H1 (cell line): ENCODE measurements at regions of chr15 and their contacts with region 1.

Region 1: DNA sequence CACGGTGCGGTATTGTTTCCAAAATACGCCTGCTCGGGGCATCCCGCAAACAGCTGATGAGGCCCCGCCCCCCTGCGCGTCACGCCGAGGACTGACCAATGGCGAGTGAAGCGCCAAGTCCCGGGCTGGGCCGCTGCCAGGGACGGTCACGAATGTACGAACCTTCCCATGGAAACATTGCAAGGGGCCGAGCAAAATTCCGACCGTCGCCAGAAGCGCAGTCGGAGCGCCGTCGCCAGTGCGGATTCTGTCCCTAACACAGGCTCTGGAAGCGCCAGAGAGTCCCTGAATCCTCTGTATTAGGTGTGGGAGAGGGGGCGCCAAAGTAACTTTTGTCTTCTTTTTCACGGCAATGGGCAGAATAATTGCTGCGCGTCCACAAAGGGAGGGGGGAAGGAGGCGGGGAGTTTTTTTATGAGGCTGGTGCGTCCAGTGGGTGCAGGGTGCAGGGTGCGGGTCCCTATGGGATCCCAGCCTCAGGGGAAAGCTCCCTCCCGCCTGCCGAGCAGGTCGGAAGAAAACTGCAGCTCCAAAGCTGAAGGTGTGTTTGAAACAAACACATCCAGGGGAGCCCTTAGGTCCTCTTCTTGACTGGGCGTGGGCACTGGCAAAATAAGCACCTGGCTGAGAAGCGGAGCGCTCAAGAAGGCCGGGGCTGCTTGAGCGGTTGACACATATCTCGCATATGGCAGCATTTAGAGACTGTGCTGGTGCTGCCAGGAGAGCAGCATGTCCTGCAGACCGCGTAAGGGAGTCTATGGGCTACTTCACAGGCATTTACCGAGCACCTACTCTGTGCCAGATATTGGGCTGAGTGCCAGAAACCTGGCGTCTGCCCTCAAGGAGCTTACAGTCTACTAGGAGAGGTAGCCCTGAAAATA is at the start of gene BMF:
- DNase-seq: peak; percentile 98 to 100
- H3K4me3 ChIP-seq: peak within 1 kb of the TSS; percentile 71 to 92 (median 90)
- H3K27ac ChIP-seq: peak within 1 kb of the TSS; percentile 29; the same call in 1 of the 2 replicates
- H3K4me1 ChIP-seq: peaks cover 26 to 50% (median 37%) of the 10 kb centered on the region in 4 experiments
- H3K27me3 ChIP-seq: no peaks in the 10 kb centered on the region
- CTCF ChIP-seq: peak; percentile 10 to 45 (median 43); a peak in 3 of 4 replicates
- EP300 ChIP-seq: no peak
- POLR2A ChIP-seq: no peak
- RAD21 ChIP-seq: peak; percentile 24 to 48
- total RNA-seq, gene BMF: 24.2 and 30.9 TPM in 2 replicates

Region 2: DNA sequence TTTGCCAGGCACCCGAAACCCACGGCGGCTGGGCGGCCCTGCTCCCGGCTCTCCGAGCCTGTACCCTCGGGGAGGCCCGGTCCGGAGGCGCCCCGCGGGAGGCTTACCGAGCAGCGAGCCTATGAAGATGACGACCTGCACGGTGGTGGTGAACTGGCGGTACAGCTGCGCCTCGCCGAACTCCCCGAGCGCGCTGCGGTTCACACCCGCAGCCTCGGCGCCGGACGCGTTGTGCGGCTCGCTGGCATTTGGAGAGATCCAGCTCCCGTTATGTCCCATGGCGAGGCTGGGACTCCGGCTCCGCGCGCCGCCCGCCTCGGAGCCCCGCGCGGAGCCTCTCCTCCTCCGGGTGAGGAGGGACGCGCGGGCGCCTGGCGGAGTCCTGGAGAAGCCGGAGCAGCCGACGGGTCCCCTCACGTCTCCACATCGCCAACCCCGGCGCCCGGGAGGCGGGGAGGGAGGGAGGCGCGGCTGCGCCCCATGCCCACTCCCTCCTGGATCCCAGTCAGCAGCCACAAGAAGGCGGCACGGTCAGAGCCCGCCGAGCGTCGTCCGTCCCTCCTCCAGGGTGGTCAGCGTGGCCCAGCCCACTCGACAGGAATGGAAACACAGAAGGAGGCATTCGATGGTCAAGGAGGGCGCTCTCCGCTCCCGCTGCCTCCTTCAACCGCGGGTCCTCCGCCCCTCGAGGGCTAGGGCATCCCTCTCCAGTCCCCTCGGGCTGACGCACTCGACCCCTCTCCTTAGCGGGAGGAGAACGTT is 189.2 kb before region 1 on chr15 and contains the start of gene GPR176:
- CTCF ChIA-PET with region 1: no interaction called
- POLR2A ChIA-PET with region 1: no interaction called
- DNase-seq: peak in 1 of 2 experiments; percentile 75
- H3K4me3 ChIP-seq: peak within 1 kb of the TSS; percentile 91 to 95 (median 94)
- H3K27ac ChIP-seq: peak within 1 kb of the TSS; percentile 69
- H3K4me1 ChIP-seq: peaks cover 5 to 9% (median 7%) of the 10 kb centered on the region in 4 experiments; a peak in 6 of 7 replicates
- H3K27me3 ChIP-seq: no peaks in the 10 kb centered on the region
- CTCF ChIP-seq: no peak; a peak in 1 of 4 replicates
- EP300 ChIP-seq: no peak
- POLR2A ChIP-seq: peak in 1 of 2 experiments; percentile 67; a peak in 2 of 3 replicates
- RAD21 ChIP-seq: no peak
- total RNA-seq, gene GPR176: 190 and 198 TPM in 2 replicates

Region 3: GRCh38 chr15:40038638-40039543 is 70.2 kb before region 1 on chr15 and contains the start of gene SRP14:
- CTCF ChIA-PET with region 1: interaction called, 406 read pairs
- POLR2A ChIA-PET with region 1: interaction called, 11 read pairs
- DNase-seq: peak; percentile 73 to 91
- H3K4me3 ChIP-seq: peak within 1 kb of the TSS; percentile 58 to 95 (median 88)
- H3K27ac ChIP-seq: peak within 1 kb of the TSS; percentile 80
- H3K4me1 ChIP-seq: peaks cover 0 to 3% (median 0%) of the 10 kb centered on the region in 4 experiments; a peak in 2 of 7 replicates
- H3K27me3 ChIP-seq: no peaks in the 10 kb centered on the region
- CTCF ChIP-seq: no peak
- EP300 ChIP-seq: no peak
- POLR2A ChIP-seq: peak; percentile 77 to 93
- RAD21 ChIP-seq: 0 out of 4 replicates have a peak, but pooled peaks of 1 of the 2 experiments have one; percentile 2
- total RNA-seq, gene SRP14: 180 and 186 TPM in 2 replicates

Region 4: GRCh38 chr15:40054605-40055545 is 54.2 kb before region 1 on chr15:
- CTCF ChIA-PET with region 1: interaction called, 406 read pairs
- POLR2A ChIA-PET with region 1: interaction called, 10 read pairs
- DNase-seq: no peak
- H3K4me3 ChIP-seq: no peak overlapping the region
- H3K27ac ChIP-seq: no peak overlapping the region
- H3K4me1 ChIP-seq: peaks cover 3 to 13% (median 5%) of the 10 kb centered on the region in 4 experiments
- H3K27me3 ChIP-seq: no peaks in the 10 kb centered on the region
- CTCF ChIP-seq: no peak
- EP300 ChIP-seq: no peak
- POLR2A ChIP-seq: no peak
- RAD21 ChIP-seq: no peak

Region 5: GRCh38 chr15:40069178-40070165 is 39.6 kb before region 1 on chr15:
- CTCF ChIA-PET with region 1: interaction called, 113 read pairs
- POLR2A ChIA-PET with region 1: interaction called, 5 read pairs
- DNase-seq: peak in 1 of 2 experiments; percentile 82
- H3K4me3 ChIP-seq: peak overlapping the region in 1 of 4 experiments; percentile 7; a peak in 1 of 8 replicates
- H3K27ac ChIP-seq: no peak overlapping the region
- H3K4me1 ChIP-seq: peaks cover 0 to 16% (median 8%) of the 10 kb centered on the region in 4 experiments; a peak in 6 of 7 replicates
- H3K27me3 ChIP-seq: no peaks in the 10 kb centered on the region; a peak in 1 of 7 replicates
- CTCF ChIP-seq: no peak
- EP300 ChIP-seq: no peak
- POLR2A ChIP-seq: no peak
- RAD21 ChIP-seq: no peak

Region 6: GRCh38 chr15:40098489-40099261 is 10.4 kb before region 1 on chr15:
- CTCF ChIA-PET with region 1: interaction called, 312 read pairs
- POLR2A ChIA-PET with region 1: interaction called, 17 read pairs
- DNase-seq: no peak
- H3K4me3 ChIP-seq: no peak overlapping the region
- H3K27ac ChIP-seq: no peak overlapping the region
- H3K4me1 ChIP-seq: peaks cover 18 to 38% (median 29%) of the 10 kb centered on the region in 4 experiments
- H3K27me3 ChIP-seq: no peaks in the 10 kb centered on the region
- CTCF ChIP-seq: no peak
- EP300 ChIP-seq: no peak
- POLR2A ChIP-seq: no peak
- RAD21 ChIP-seq: no peak

Region 7: GRCh38 chr15:40160689-40161688 is 51.9 kb after region 1 on chr15 and contains the start of gene BUB1B:
- CTCF ChIA-PET with region 1: interaction called, 249 read pairs
- POLR2A ChIA-PET with region 1: interaction called, 143 read pairs
- DNase-seq: peak; percentile 83 to 95
- H3K4me3 ChIP-seq: peak within 1 kb of the TSS; percentile 85 to 97 (median 91)
- H3K27ac ChIP-seq: peak within 1 kb of the TSS; percentile 91
- H3K4me1 ChIP-seq: peaks cover 10 to 19% (median 14%) of the 10 kb centered on the region in 4 experiments
- H3K27me3 ChIP-seq: no peaks in the 10 kb centered on the region
- CTCF ChIP-seq: no peak
- EP300 ChIP-seq: no peak
- POLR2A ChIP-seq: peak; percentile 64 to 90
- RAD21 ChIP-seq: peak in 1 of 2 experiments; percentile 3; a peak in 2 of 4 replicates
- total RNA-seq, gene BUB1B: 144 and 153 TPM in 2 replicates

Region 8: GRCh38 chr15:40405501-40406381 is 296.6 kb after region 1 on chr15 and contains the start of gene IVD:
- CTCF ChIA-PET with region 1: no interaction called
- POLR2A ChIA-PET with region 1: no interaction called
- DNase-seq: peak; percentile 78 to 92
- H3K4me3 ChIP-seq: peak within 1 kb of the TSS; percentile 67 to 82 (median 74)
- H3K27ac ChIP-seq: peak within 1 kb of the TSS; percentile 72; the same call in 1 of the 2 replicates
- H3K4me1 ChIP-seq: peaks cover 0 to 4% (median 1%) of the 10 kb centered on the region in 4 experiments; a peak in 3 of 7 replicates
- H3K27me3 ChIP-seq: no peaks in the 10 kb centered on the region
- CTCF ChIP-seq: no peak
- EP300 ChIP-seq: no peak
- POLR2A ChIP-seq: peak; percentile 84 to 88
- RAD21 ChIP-seq: no peak
- total RNA-seq, gene IVD: 78.8 and 80.0 TPM in 2 replicates